B cell (primary cell): ENCODE measurements at regions of chr12 and their contacts with region 1.

Region 1: DNA sequence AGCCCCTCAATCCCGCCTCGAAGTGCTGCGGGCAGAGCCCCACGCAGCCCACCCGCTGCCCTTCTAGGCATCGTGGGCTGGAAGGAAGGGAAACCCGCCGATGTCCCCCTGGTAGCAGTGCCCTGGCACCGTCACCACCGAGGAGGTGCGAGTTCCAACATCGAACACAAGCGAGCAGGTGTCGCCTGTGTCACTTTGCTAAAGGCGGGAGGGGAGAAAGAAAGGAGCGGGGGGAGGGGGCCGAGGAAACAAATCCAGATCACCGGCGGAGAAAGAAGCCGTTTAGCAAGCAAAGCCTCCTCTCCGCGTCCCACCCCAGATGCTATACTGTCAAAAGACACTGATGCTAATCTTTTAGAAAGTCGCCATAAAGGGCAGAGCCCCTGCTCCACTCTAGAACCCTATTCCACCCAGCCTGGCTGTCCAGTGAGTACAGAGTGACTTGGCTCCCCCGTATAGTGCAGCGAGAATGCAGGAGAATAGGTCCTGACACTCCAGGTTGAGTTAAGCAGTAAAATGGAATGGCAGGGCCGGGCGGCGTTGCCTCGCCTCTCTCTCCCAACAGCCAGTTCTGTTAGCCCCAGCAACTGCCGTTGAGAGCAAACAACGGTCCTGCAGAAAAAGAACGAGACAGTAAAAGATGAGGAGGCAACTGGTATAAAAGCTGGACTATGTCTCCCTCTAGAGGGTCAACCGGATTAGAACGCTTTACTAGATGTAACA is 67.9 kb upstream of the USP15 start:
- DNase-seq: peak; percentile 75
- ATAC-seq: peak; percentile 85
- H3K4me3 ChIP-seq: peak overlapping the region; percentile 9 to 51 (median 45)
- H3K4me3 Mint-ChIP-seq: peak overlapping the region; percentile 91
- H3K27ac ChIP-seq: no peak overlapping the region
- H3K27ac Mint-ChIP-seq: peak overlapping the region; percentile 20
- H3K4me1 ChIP-seq: peaks cover 22 to 27% of the 10 kb centered on the region in 2 donors
- H3K4me1 Mint-ChIP-seq: peaks cover 30% of the 10 kb centered on the region
- H3K27me3 ChIP-seq: peaks cover 0 to 30% (median 23%) of the 10 kb centered on the region in 4 experiments
- H3K27me3 Mint-ChIP-seq: peaks cover 39% of the 10 kb centered on the region
- CTCF ChIP-seq: peak; percentile 89

Region 2: DNA sequence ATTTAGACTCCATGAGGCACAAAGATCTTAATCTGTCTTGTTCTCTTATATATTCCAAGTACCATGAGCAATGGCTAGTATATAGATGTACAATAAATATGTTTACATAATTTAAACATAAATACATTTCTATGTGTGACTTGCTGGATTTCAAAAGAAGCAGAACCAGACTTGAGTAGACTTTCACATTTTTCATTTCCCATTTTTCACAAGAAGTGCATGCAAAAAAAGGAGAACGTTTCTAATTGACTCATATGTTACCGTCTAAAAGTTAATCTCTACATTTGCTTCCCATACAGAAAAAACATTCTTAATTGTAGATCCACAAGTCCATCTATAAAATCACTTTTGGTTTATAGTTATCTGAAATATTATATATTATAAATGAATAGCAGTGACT is 188.6 kb before region 1 on chr12:
- CTCF ChIA-PET with region 1: no interaction called
- POLR2A ChIA-PET with region 1: no interaction called
- intact Hi-C with region 1: loop called (anchors 2 kb)
- DNase-seq: no peak
- ATAC-seq: no peak
- H3K4me3 ChIP-seq: no peak overlapping the region
- H3K4me3 Mint-ChIP-seq: no peak overlapping the region
- H3K27ac ChIP-seq: no peak overlapping the region
- H3K27ac Mint-ChIP-seq: no peak overlapping the region
- H3K4me1 ChIP-seq: no peaks in the 10 kb centered on the region
- H3K4me1 Mint-ChIP-seq: no peaks in the 10 kb centered on the region
- H3K27me3 ChIP-seq: no peaks in the 10 kb centered on the region
- H3K27me3 Mint-ChIP-seq: no peaks in the 10 kb centered on the region
- CTCF ChIP-seq: no peak

Region 3: DNA sequence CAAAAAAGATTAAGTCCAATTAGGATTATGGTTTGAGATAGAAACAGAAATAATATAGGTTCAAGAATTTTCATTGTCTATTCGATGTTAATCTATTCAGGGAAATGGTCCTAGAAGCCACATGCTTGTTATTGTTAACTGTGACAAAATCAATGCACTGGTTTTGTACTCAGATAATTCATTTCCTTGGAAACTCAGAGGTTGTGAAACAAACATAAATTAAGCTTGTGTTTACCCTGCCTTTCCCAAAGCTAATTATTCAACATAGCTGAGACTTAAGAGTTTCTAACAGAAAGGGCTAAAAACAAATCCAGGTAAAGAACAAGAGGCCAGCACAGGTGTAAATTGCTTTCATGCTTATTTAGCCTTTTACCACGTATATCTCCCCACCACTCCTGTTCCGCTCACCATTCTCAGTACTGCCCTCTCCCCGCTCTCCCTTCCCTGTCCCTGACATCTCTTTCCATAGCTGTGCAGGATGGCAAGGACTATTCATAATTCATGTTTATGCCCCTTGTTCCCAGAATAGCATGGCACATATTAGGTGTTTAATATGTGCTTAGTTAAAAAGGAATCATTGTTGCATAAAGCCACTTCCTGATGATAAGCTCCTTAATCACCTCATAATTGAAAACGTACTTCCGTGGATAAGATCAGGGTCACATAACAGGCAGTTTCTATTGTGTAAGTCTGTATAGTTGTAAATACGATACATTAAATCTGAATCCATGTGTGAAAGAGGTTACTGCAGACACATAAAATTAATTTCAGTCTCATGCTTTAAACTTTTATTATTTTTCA is 64.0 kb before region 1 on chr12:
- CTCF ChIA-PET with region 1: no interaction called
- POLR2A ChIA-PET with region 1: no interaction called
- intact Hi-C with region 1: loop called (anchors 5 kb)
- DNase-seq: no peak
- ATAC-seq: no peak
- H3K4me3 ChIP-seq: no peak overlapping the region
- H3K4me3 Mint-ChIP-seq: no peak overlapping the region
- H3K27ac ChIP-seq: no peak overlapping the region
- H3K27ac Mint-ChIP-seq: no peak overlapping the region
- H3K4me1 ChIP-seq: no peaks in the 10 kb centered on the region
- H3K4me1 Mint-ChIP-seq: no peaks in the 10 kb centered on the region
- H3K27me3 ChIP-seq: peaks cover 0 to 3% (median 0%) of the 10 kb centered on the region in 4 experiments
- H3K27me3 Mint-ChIP-seq: peaks cover 16% of the 10 kb centered on the region
- CTCF ChIP-seq: no peak

Region 4: GRCh38 chr12:62205346-62205745 is 13.0 kb after region 1 on chr12:
- CTCF ChIA-PET with region 1: interaction called, 13 read pairs
- POLR2A ChIA-PET with region 1: no interaction called
- intact Hi-C with region 1: no loop called
- DNase-seq: no peak
- ATAC-seq: no peak
- H3K4me3 ChIP-seq: no peak overlapping the region
- H3K4me3 Mint-ChIP-seq: no peak overlapping the region
- H3K27ac ChIP-seq: no peak overlapping the region
- H3K27ac Mint-ChIP-seq: no peak overlapping the region
- H3K4me1 ChIP-seq: no peaks in the 10 kb centered on the region
- H3K4me1 Mint-ChIP-seq: no peaks in the 10 kb centered on the region
- H3K27me3 ChIP-seq: peaks cover 0 to 5% (median 0%) of the 10 kb centered on the region in 4 experiments
- H3K27me3 Mint-ChIP-seq: peaks cover 12% of the 10 kb centered on the region
- CTCF ChIP-seq: no peak